Activated T-helper 1 cell treated with anti-CD3 and anti-CD28 coated beads, Interleukin-12 subunit alpha, Interleukin-12 subunit beta, Interleukin-2, Interleukin-4 antibody, amounts not matched to agents 30 ng/mL and 10 ng/mL and 1 ng/mL, durations not matched to agents 14 hours and 24 hours and 36 hours (primary cell): ENCODE measurements at regions of chr2 and their contacts with region 1.

Region 1: DNA sequence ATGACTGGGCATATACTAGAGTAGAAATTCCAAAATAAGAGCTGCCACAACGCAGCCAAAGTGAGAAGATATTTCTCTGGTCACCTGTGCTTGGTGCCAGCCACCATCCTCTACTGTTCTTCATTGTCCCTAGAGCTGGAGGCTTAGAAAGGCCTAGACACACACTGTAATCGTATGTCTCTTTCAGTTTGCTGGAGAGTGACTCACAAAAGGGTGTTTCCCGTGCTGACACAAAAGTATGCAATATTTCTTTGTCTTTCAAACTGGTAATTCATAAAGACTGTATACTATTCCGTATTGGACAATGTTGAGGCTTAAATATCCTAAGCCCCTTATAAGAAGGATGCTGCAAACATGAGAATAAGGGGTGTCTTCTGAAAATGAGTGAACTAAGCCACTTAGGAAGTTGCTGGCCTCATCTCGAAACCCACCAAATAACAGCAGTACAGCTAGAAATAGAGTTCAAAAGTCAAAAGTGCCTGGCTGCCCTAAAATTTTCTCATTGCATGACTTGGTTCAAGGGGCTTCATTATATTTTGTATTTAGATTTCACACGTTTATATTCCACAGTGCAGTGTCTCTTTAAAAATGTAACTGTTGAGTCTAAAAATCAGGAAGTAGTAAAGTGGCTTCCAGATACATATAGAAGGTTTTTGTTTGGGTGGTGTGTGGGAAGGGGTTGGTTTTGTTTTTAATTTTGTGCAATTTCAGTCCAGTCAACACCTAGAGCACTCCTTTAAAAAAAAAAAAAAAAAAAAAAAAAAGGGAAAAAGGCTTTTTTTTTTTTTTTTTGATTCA is 601.1 kb downstream of the ARHGAP15 start:
- DNase-seq: no peak
- H3K4me3 Mint-ChIP-seq: peak overlapping the region; percentile 49
- H3K27ac Mint-ChIP-seq: peak overlapping the region; percentile 92
- H3K4me1 Mint-ChIP-seq: peaks cover 58% of the 10 kb centered on the region
- H3K27me3 Mint-ChIP-seq: no peaks in the 10 kb centered on the region

Region 2: GRCh38 chr2:143284087-143284675 is 446.2 kb before region 1 on chr2:
- intact Hi-C with region 1: no loop called
- DNase-seq: no peak
- H3K4me3 Mint-ChIP-seq: no peak overlapping the region
- H3K27ac Mint-ChIP-seq: no peak overlapping the region
- H3K4me1 Mint-ChIP-seq: peaks cover 30% of the 10 kb centered on the region
- H3K27me3 Mint-ChIP-seq: no peaks in the 10 kb centered on the region

Region 3: GRCh38 chr2:143451642-143452281 is 278.6 kb before region 1 on chr2:
- intact Hi-C with region 1: loop called (anchors 5 kb)
- DNase-seq: no peak
- H3K4me3 Mint-ChIP-seq: no peak overlapping the region
- H3K27ac Mint-ChIP-seq: no peak overlapping the region
- H3K4me1 Mint-ChIP-seq: peaks cover 42% of the 10 kb centered on the region
- H3K27me3 Mint-ChIP-seq: no peaks in the 10 kb centered on the region

Region 4: DNA sequence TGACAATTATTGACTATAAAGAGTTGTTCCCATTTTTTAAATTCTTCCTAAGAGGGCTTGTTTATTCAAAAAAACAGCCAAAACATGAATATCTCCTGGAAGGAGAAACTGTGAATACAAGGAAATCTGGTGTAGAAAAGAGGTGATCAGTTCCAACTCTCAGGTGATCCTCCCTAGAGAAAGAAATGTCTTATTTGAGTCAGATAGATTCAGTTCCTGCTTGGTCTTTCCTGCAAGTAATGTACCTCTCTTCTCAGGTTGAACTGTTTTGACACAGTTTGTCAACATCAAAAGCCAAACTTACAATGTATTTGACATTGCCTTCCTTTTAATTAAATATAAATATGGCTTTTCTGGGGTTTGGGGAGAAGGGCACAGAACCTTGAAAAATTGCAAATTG is 33.7 kb before region 1 on chr2:
- intact Hi-C with region 1: loop called (anchors 1 kb)
- DNase-seq: no peak
- H3K4me3 Mint-ChIP-seq: no peak overlapping the region
- H3K27ac Mint-ChIP-seq: no peak overlapping the region
- H3K4me1 Mint-ChIP-seq: peaks cover 27% of the 10 kb centered on the region
- H3K27me3 Mint-ChIP-seq: no peaks in the 10 kb centered on the region

Region 5: DNA sequence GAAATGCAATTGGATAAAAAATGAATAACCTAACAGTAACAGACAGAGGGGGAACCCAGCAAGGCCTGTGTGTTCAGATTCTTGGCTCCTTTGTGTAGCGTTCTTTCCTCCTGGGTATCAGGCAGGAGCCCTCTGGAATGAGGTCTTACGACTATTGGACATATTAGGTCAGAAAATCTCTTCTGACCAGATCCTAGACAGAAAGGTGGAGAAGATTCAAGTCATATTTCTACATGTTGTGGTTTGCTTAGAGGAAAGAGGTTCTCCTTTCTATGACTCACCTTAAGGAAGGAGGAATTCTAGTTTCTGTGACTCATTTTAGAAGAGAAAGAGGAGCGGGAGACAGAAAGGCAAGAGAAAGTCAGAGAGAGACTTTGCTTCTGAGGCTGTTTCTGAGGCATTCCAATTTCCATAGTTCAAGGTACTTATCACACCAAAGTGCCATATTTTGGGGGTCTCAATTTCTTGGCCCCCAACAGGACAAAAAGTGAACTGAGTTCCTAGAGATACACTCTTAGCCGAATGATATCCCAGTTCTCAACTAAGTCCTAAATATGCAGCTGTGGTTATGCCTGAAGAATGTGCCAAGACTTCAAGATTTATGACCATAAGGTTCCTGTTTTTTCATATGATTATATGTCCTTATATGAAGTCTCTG is 171.0 kb after region 1 on chr2:
- intact Hi-C with region 1: loop called (anchors 1 kb)
- DNase-seq: no peak
- H3K4me3 Mint-ChIP-seq: no peak overlapping the region
- H3K27ac Mint-ChIP-seq: no peak overlapping the region
- H3K4me1 Mint-ChIP-seq: peaks cover 20% of the 10 kb centered on the region
- H3K27me3 Mint-ChIP-seq: peaks cover 23% of the 10 kb centered on the region

Region 6: GRCh38 chr2:144162652-144163051 is 432.3 kb after region 1 on chr2:
- intact Hi-C with region 1: no loop called
- DNase-seq: peak; percentile 12
- H3K4me3 Mint-ChIP-seq: no peak overlapping the region
- H3K27ac Mint-ChIP-seq: no peak overlapping the region
- H3K4me1 Mint-ChIP-seq: no peaks in the 10 kb centered on the region
- H3K27me3 Mint-ChIP-seq: no peaks in the 10 kb centered on the region

Region 7: DNA sequence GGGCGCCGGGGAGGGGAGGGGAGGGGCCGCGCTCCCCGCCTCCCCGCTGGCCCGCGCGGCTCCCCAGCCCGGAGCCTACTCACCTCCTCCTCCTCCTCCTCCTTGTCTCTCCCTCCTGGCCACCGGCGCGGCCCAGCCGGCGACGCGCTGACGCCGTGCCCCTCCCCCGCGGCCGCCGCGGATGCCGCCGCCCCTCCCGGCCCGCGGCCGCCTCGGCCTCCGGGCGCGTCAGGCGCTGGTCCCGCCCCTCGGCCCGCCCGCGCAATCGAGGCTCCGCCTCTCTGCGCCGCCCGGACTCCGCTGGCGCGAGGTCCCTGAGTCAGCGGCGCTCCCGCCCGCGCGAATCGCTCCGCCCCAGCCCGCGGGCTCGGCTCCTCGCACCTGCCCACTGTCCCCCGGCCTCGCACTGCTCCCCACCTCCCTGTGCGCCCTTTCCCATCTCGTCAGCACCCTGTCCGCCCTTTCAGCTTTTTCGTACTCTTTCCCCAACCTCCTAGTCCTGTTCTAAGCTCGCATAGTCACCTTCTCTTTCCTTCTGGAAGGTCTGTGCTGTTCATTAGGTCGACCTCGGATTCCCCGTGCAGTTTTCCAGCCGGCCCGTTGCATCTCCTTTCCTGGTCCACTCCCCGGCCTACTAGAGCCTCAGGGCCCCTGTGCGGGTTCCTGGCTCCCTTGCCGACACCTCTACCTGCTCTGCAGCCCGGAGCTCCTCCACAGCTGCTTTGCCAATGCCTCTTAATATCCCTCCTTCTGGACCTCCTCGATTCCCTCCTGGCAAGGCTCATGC is 602.2 kb after region 1 on chr2:
- intact Hi-C with region 1: loop called (anchors 2 kb)
- DNase-seq: peak; percentile 91
- H3K4me3 Mint-ChIP-seq: peak overlapping the region; percentile 85
- H3K27ac Mint-ChIP-seq: peak overlapping the region; percentile 98
- H3K4me1 Mint-ChIP-seq: peaks cover 48% of the 10 kb centered on the region
- H3K27me3 Mint-ChIP-seq: no peaks in the 10 kb centered on the region